Activated CD4-positive, alpha-beta T cell treated with anti-CD3 and anti-CD28 coated beads, Interleukin-2, amount 10 ng/mL, durations not matched to agents 7 days and 5 days (primary cell): ENCODE measurements at regions of chr5 and their contacts with region 1.

Region 1: GRCh38 chr5:149834246-149834855 is 104.2 kb downstream of the PPARGC1B start:
- DNase-seq: peak; percentile 75
- H3K4me3 Mint-ChIP-seq: no peak overlapping the region
- H3K27ac Mint-ChIP-seq: no peak overlapping the region
- H3K4me1 Mint-ChIP-seq: no peaks in the 10 kb centered on the region
- H3K27me3 Mint-ChIP-seq: no peaks in the 10 kb centered on the region

Region 2: GRCh38 chr5:149847611-149848010 is 13.3 kb after region 1 on chr5:
- CTCF ChIA-PET with region 1: interaction called, 13 read pairs
- POLR2A ChIA-PET with region 1: no interaction called
- DNase-seq: no peak
- H3K4me3 Mint-ChIP-seq: no peak overlapping the region
- H3K27ac Mint-ChIP-seq: no peak overlapping the region
- H3K4me1 Mint-ChIP-seq: no peaks in the 10 kb centered on the region
- H3K27me3 Mint-ChIP-seq: no peaks in the 10 kb centered on the region

Region 3: GRCh38 chr5:149852641-149853330 is 18.4 kb after region 1 on chr5:
- CTCF ChIA-PET with region 1: interaction called, 13 read pairs
- POLR2A ChIA-PET with region 1: no interaction called
- DNase-seq: peak; percentile 54
- H3K4me3 Mint-ChIP-seq: no peak overlapping the region
- H3K27ac Mint-ChIP-seq: no peak overlapping the region
- H3K4me1 Mint-ChIP-seq: no peaks in the 10 kb centered on the region
- H3K27me3 Mint-ChIP-seq: no peaks in the 10 kb centered on the region

Region 4: DNA sequence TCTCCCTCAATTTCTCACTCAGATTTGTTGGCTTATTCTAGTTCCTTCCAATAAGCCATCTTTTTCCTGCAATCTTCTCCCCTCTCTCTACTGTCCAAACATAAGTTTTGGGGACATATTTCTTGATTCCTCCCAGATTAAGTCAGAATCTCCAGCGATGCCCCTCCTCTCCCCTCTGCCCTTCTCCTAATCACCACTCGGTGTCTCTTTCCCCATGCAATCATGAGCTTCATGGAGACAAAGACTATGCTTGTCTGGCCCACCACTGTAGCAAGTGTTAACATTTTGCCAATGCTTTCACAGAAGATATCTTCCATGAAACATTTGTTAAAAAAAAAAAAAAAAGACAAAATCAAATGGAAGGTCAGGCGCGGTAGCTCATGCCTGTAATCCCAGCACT is 67.8 kb after region 1 on chr5:
- CTCF ChIA-PET with region 1: no interaction called
- POLR2A ChIA-PET with region 1: no interaction called
- DNase-seq: no peak
- H3K4me3 Mint-ChIP-seq: no peak overlapping the region
- H3K27ac Mint-ChIP-seq: no peak overlapping the region
- H3K4me1 Mint-ChIP-seq: peaks cover 10% of the 10 kb centered on the region
- H3K27me3 Mint-ChIP-seq: peaks cover 21% of the 10 kb centered on the region

Region 5: GRCh38 chr5:149990518-149991376 is 156.4 kb after region 1 on chr5:
- CTCF ChIA-PET with region 1: interaction called, 59 read pairs
- POLR2A ChIA-PET with region 1: no interaction called
- DNase-seq: peak; percentile 74
- H3K4me3 Mint-ChIP-seq: no peak overlapping the region
- H3K27ac Mint-ChIP-seq: no peak overlapping the region
- H3K4me1 Mint-ChIP-seq: no peaks in the 10 kb centered on the region
- H3K27me3 Mint-ChIP-seq: no peaks in the 10 kb centered on the region